ENCODE measurements at regions of chr20 and their contacts with region 1.

Region 1: DNA sequence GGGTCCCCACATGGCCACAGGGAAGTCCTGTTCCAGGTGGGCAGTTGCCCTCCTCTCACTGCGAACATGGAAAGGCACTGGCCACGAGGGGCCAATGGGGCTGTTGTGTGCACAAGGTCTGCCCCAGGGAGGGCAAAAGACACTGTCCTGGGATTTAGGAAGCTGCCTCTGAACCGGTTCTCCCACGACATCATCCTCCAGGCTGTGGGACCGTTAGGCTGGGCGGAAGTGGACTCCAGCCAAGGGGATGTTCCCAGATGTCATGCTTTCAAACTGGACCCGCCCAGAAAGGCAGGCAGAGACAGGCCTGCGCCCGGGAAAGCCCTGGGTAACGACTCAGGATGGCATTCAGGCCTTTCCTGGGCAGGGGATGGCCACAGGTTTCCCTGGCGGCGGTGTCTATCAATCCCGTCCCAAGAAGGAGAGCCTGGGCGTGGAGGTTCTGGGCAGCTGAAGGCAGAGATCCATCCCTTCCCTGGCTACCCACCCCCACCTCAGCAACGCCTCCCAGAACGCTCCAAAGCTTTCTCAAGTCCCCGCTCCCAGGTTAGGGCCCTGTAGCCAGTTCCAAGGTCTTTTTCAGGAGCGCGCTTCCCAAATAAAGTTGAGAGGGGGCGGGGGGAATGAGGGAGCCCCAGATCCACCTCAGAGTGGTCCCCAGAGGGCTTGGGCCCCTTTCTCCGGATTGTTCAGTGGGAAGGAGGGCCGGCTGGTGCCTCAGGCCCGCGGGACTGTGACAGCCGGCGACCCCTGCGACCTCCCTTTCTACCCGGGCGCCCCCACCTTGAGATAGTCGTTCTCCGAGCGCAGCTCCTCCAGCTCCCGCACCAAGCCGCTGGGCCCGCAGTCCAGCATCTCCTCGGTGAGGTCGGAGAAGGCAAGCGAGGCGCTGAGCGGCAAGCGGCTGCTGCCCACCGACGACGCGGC is 13.8 kb upstream of the TLDC2 start:
- DNase-seq: peak; percentile 53 to 91
- H3K4me3 ChIP-seq: peak overlapping the region; percentile 79 to 92
- H3K27ac ChIP-seq: peak overlapping the region; percentile 91
- H3K4me1 ChIP-seq: peaks cover 4 to 16% of the 10 kb centered on the region in 2 donors
- H3K27me3 ChIP-seq: no peaks in the 10 kb centered on the region
- CTCF ChIP-seq: no peak

Region 2: GRCh38 chr20:36666181-36666740 is 195.9 kb before region 1 on chr20:
- intact Hi-C with region 1: loop called (anchors 5 kb)
- DNase-seq: no peak
- H3K4me3 ChIP-seq: no peak overlapping the region
- H3K27ac ChIP-seq: no peak overlapping the region
- H3K4me1 ChIP-seq: no peaks in the 10 kb centered on the region
- H3K27me3 ChIP-seq: no peaks in the 10 kb centered on the region
- CTCF ChIP-seq: peak; percentile 23 to 45 (median 41)

Region 3: DNA sequence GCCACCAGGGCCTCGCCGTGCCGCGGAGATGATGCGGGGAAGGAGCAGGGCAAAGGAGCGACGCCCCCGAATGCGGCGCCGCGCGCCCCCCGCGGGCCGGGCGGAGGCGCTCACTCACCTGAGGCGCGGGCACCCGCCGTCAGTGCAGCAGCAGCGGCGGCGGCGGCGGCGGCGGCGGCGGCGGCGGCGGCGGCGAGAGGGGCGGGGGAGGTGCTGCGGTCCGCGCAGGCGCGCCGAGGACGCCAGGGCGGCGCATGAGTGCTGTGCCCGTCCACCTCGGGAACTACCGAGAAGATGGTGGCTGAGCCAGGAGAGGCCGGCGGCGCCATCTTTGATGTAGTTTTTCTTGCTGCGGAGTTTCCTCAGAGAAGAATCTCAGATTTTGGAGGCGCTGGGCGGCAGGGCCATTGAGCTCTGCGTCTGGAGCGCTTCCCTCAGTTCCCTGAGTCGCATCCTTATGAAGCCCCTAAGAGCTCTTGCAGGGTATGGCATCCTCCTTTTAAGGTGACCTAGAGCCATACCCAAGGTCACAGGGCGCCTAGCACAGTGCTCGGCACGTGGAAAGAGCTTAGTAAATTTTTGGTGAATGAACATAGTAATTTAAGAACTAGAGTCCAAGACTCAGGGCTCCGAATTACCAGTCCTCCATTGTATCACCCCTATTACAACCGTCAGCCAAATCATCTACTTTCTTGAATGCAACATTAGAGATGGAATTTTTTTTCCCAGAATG is 116.0 kb before region 1 on chr20 and contains the start of gene NDRG3:
- intact Hi-C with region 1: no loop called
- DNase-seq: peak; percentile 84 to 97
- H3K4me3 ChIP-seq: peak within 1 kb of the TSS; percentile 97 to 100
- H3K27ac ChIP-seq: peak within 1 kb of the TSS; percentile 84 to 89
- H3K4me1 ChIP-seq: peaks cover 3 to 14% of the 10 kb centered on the region in 2 donors
- H3K27me3 ChIP-seq: no peaks in the 10 kb centered on the region
- CTCF ChIP-seq: peak in 2 of 3 experiments; percentile 3 to 29
- total RNA-seq, gene NDRG3: 36.9 TPM

Region 4: GRCh38 chr20:36784900-36785299 is 77.2 kb before region 1 on chr20:
- intact Hi-C with region 1: no loop called
- DNase-seq: no peak
- H3K4me3 ChIP-seq: no peak overlapping the region
- H3K27ac ChIP-seq: peak overlapping the region; percentile 49 to 50
- H3K4me1 ChIP-seq: no peaks in the 10 kb centered on the region
- H3K27me3 ChIP-seq: no peaks in the 10 kb centered on the region
- CTCF ChIP-seq: no peak

Region 5: GRCh38 chr20:36802326-36803222 is 59.6 kb before region 1 on chr20:
- intact Hi-C with region 1: loop called (anchors 5 kb)
- DNase-seq: no peak
- H3K4me3 ChIP-seq: no peak overlapping the region
- H3K27ac ChIP-seq: peak overlapping the region; percentile 58 to 75
- H3K4me1 ChIP-seq: no peaks in the 10 kb centered on the region
- H3K27me3 ChIP-seq: no peaks in the 10 kb centered on the region
- CTCF ChIP-seq: peak in 1 of 3 experiments; percentile 58

Region 6: DNA sequence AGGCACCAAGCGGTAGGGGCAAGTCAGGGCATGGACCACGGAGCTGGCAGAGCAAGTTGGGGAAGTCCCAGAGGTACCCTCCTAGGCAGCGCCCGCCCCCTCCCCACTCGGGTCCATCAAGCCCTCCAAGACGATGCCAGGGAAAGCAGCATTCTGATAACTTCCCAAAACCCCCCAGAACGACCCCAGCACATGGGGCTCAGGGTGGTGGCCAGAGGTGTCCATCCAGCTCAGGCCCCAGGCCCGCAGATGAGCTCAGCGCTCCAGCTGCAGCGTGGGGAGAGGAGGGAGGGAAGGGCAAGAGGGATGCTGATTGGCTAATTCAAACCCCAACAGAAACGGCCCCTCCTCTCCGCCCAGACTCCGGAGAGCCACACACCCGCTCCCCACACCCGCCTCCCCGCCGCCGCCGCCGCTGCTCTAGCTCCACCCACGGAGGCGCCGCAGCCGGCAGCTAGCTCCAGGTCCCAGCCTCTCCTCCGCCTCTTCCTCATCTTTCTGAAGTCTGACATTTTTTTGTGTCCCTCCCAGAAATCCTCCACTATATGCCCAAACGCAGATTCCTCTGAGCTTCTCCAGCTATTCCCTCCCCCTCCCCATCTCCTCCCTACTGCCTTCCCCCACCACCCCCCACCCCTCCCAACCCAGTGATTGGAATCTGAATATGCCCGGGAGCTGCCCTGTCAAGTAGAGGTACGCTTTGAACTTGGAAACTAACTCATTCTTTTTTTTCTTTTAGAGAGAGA is 26.5 kb before region 1 on chr20:
- intact Hi-C with region 1: loop called (anchors 1 kb)
- DNase-seq: peak; percentile 77 to 96
- H3K4me3 ChIP-seq: peak overlapping the region; percentile 18 to 56
- H3K27ac ChIP-seq: peak overlapping the region; percentile 81 to 92
- H3K4me1 ChIP-seq: peaks cover 22 to 50% of the 10 kb centered on the region in 2 donors
- H3K27me3 ChIP-seq: no peaks in the 10 kb centered on the region
- CTCF ChIP-seq: no peak

Region 7: DNA sequence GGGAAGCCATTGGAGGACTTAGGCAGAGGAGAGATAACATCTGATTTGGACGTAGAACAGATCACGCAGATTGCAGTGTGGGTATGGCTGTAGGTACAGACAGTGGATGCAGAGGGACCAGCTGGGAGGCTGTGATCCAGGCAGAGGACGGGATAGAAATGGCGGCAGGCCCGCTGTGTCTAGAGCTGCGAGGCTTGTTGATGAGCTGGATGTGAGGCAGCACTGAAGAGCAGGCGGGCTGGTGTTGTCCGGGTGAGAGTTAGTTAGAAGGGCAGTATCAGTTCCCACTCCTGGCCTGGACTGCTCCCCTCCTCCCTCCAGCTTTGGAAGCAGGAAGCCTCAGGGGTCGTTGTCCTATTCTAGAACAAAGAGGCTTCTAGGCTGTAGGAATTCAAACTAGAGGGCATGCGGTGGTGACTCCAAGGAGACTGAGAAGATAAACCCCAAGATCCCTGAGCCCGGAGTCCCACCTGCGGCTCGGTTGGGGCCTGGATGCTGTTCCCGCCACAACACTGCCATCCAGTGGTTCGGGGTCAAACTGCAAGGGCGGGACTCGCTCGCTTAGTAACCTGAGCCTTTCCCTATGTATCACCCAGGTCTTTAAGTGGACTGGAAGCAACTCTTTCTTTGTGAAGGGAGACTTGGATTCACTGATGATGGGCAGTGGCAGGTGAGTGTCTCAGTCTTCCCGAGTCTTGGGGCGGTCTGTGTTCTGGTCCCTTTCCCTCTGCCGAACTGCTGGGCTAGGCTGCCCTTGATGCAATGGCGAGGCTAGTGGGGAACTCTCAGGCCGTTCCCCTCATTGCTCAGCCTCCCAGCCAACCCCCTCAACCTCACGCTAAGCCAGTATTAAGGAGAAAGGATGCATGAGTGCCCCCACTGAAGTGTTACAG is 25.0 kb after region 1 on chr20:
- intact Hi-C with region 1: loop called (anchors 1 kb)
- DNase-seq: peak in 1 of 2 donors; percentile 90
- H3K4me3 ChIP-seq: peak overlapping the region in 1 of 2 donors; percentile 12
- H3K27ac ChIP-seq: no peak overlapping the region
- H3K4me1 ChIP-seq: no peaks in the 10 kb centered on the region
- H3K27me3 ChIP-seq: no peaks in the 10 kb centered on the region
- CTCF ChIP-seq: peak; percentile 93 to 96 (median 95)